CD8-positive, alpha-beta T cell (primary cell): ENCODE measurements at regions of chr5 and their contacts with region 1.

Region 1: GRCh38 chr5:16791036-16791705 is 144.9 kb downstream of the MYO10 start:
- DNase-seq: peak in 4 of 9 experiments; percentile 11 to 45 (median 26)
- ATAC-seq: peak; percentile 17
- H3K4me3 ChIP-seq: no peak overlapping the region
- H3K4me3 Mint-ChIP-seq: peak overlapping the region; percentile 32
- H3K27ac ChIP-seq: no peak overlapping the region
- H3K27ac Mint-ChIP-seq: no peak overlapping the region
- H3K4me1 ChIP-seq: no peaks in the 10 kb centered on the region
- H3K4me1 Mint-ChIP-seq: peaks cover 2% of the 10 kb centered on the region
- H3K27me3 ChIP-seq: no peaks in the 10 kb centered on the region
- H3K27me3 Mint-ChIP-seq: no peaks in the 10 kb centered on the region
- CTCF ChIP-seq: peak; percentile 74

Region 2: GRCh38 chr5:17189381-17190036 is 398.3 kb after region 1 on chr5:
- CTCF ChIA-PET with region 1: interaction called, 3 read pairs
- POLR2A ChIA-PET with region 1: no interaction called
- intact Hi-C with region 1: loop called in 1 of 2 experiments (anchors 5 kb)
- DNase-seq: peak; percentile 7 to 58 (median 40)
- ATAC-seq: no peak
- H3K4me3 ChIP-seq: no peak overlapping the region
- H3K4me3 Mint-ChIP-seq: no peak overlapping the region
- H3K27ac ChIP-seq: no peak overlapping the region
- H3K27ac Mint-ChIP-seq: no peak overlapping the region
- H3K4me1 ChIP-seq: no peaks in the 10 kb centered on the region
- H3K4me1 Mint-ChIP-seq: no peaks in the 10 kb centered on the region
- H3K27me3 ChIP-seq: no peaks in the 10 kb centered on the region
- H3K27me3 Mint-ChIP-seq: peaks cover 12% of the 10 kb centered on the region
- CTCF ChIP-seq: peak; percentile 71

Region 3: GRCh38 chr5:17381932-17382331 is 590.8 kb after region 1 on chr5:
- CTCF ChIA-PET with region 1: no interaction called
- POLR2A ChIA-PET with region 1: no interaction called
- intact Hi-C with region 1: no loop called
- DNase-seq: peak in 1 of 9 experiments; percentile 6
- ATAC-seq: no peak
- H3K4me3 ChIP-seq: no peak overlapping the region
- H3K4me3 Mint-ChIP-seq: no peak overlapping the region
- H3K27ac ChIP-seq: no peak overlapping the region
- H3K27ac Mint-ChIP-seq: no peak overlapping the region
- H3K4me1 ChIP-seq: no peaks in the 10 kb centered on the region
- H3K4me1 Mint-ChIP-seq: no peaks in the 10 kb centered on the region
- H3K27me3 ChIP-seq: no peaks in the 10 kb centered on the region
- H3K27me3 Mint-ChIP-seq: no peaks in the 10 kb centered on the region
- CTCF ChIP-seq: no peak

Region 4: DNA sequence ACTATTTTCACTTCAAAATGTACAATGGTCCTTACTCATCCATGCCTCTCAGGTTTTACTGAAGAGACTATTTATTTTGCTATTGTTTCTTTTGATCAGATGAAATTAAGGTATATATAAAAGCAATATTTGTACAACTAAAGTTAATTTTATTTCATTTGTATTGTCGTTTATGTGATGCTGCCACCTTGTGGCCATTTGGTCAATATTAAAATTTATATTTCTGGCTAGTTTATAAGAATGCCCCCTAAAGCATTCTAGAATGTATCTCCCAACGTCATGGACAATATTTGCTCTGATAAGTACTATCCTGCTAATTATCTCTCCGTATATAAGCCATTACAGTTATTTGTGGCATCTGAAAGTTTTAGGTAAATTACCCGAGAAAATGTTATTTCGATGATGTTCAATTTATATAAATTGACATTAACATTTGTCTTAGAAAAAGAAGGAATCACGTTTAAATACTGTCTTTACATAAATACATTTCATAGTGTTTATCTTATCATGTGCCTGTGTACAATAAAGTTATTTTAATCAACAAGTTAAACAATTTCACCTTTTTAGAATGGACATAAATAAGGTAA is 1523.1 kb after region 1 on chr5:
- CTCF ChIA-PET with region 1: no interaction called
- POLR2A ChIA-PET with region 1: no interaction called
- intact Hi-C with region 1: loop called in 1 of 2 experiments (anchors 10 kb)
- DNase-seq: peak in 1 of 9 experiments; percentile 7
- ATAC-seq: no peak
- H3K4me3 ChIP-seq: no peak overlapping the region
- H3K4me3 Mint-ChIP-seq: no peak overlapping the region
- H3K27ac ChIP-seq: no peak overlapping the region
- H3K27ac Mint-ChIP-seq: no peak overlapping the region
- H3K4me1 ChIP-seq: no peaks in the 10 kb centered on the region
- H3K4me1 Mint-ChIP-seq: no peaks in the 10 kb centered on the region
- H3K27me3 ChIP-seq: no peaks in the 10 kb centered on the region
- H3K27me3 Mint-ChIP-seq: no peaks in the 10 kb centered on the region
- CTCF ChIP-seq: peak; percentile 38

Region 5: DNA sequence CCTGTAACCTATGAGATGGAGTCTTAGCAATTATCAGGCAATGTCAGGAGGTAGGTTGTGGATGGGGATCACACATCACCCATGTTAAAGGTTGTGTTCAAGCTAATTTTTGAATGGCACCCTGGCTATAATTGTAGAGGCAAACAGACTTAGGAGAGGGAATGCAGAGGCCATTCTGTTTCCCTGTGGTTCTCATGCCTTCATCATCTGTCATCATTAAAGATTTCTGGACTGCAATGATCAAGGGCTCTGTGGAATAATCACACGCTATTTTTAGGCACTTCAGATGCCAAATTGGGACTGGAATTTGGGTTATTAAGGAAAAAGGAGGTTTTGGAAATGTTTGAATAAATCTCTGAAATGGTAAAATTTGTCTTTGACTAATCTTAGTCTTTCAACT is 1908.5 kb after region 1 on chr5:
- CTCF ChIA-PET with region 1: no interaction called
- POLR2A ChIA-PET with region 1: no interaction called
- intact Hi-C with region 1: loop called in 1 of 2 experiments (anchors 10 kb)
- DNase-seq: no peak
- ATAC-seq: no peak
- H3K4me3 ChIP-seq: no peak overlapping the region
- H3K4me3 Mint-ChIP-seq: no peak overlapping the region
- H3K27ac ChIP-seq: no peak overlapping the region
- H3K27ac Mint-ChIP-seq: no peak overlapping the region
- H3K4me1 ChIP-seq: peaks cover 6% of the 10 kb centered on the region
- H3K4me1 Mint-ChIP-seq: peaks cover 9% of the 10 kb centered on the region
- H3K27me3 ChIP-seq: no peaks in the 10 kb centered on the region
- H3K27me3 Mint-ChIP-seq: no peaks in the 10 kb centered on the region
- CTCF ChIP-seq: no peak